ENCODE measurements at regions of chr2 and their contacts with region 1.

Region 1: GRCh38 chr2:133844214-133844892 is 276.1 kb upstream of the NCKAP5 start:
- DNase-seq: peak; percentile 9
- H3K4me3 ChIP-seq: no peak overlapping the region
- H3K27me3 ChIP-seq: no peaks in the 10 kb centered on the region
- CTCF ChIP-seq: peak; percentile 90

Region 2: GRCh38 chr2:133266041-133266925 is 578.1 kb before region 1 on chr2:
- CTCF ChIA-PET with region 1: interaction called, 18 read pairs
- POLR2A ChIA-PET with region 1: no interaction called
- DNase-seq: no peak
- H3K4me3 ChIP-seq: peak overlapping the region; percentile 53
- H3K27me3 ChIP-seq: no peaks in the 10 kb centered on the region
- CTCF ChIP-seq: peak; percentile 34; the same call in 1 of the 2 replicates

Region 3: DNA sequence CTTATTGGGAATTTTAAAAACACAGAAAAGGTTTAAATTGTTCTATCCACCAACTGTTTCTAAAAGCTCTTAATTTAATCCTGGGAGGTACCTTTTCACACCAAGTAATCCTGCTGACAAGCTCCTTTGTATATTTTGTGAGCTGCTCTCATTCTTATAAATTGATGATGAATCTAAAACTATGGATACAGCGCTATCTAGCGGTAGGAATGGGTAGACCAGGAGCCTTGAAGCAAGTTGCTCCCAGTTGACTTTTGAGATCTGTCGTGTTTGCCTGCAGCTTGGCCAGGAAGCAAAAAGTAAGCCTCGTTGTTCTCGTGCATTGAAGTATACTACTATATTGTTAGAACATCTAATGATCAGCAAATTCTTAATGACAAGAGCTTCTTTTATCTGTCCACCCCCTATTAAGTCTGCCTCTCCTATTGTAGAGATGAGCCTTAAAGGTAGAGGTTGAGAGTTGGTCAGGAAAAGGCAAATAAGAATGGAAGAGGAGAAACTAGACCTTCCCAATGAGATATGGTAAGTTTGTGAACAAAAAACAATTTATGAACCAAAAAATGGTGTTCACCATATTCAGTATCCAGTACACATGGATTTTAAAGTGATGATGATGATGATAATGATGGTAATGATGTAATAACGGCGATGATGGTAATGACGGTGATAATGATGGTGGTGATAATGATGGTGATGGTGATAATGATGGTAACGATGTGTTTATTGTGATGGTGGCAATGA is 64.1 kb before region 1 on chr2:
- CTCF ChIA-PET with region 1: interaction called, 13 read pairs
- POLR2A ChIA-PET with region 1: no interaction called
- DNase-seq: no peak
- H3K4me3 ChIP-seq: no peak overlapping the region
- H3K27me3 ChIP-seq: no peaks in the 10 kb centered on the region
- CTCF ChIP-seq: peak; percentile 82

Region 4: GRCh38 chr2:133821107-133821760 is 23.1 kb before region 1 on chr2:
- CTCF ChIA-PET with region 1: interaction called, 11 read pairs
- POLR2A ChIA-PET with region 1: no interaction called
- DNase-seq: no peak
- H3K4me3 ChIP-seq: no peak overlapping the region
- H3K27me3 ChIP-seq: no peaks in the 10 kb centered on the region
- CTCF ChIP-seq: no peak